Head of caudate nucleus (tissue), 42 donors: ENCODE measurements at regions of chr3 and their contacts with region 1.

Region 1: DNA sequence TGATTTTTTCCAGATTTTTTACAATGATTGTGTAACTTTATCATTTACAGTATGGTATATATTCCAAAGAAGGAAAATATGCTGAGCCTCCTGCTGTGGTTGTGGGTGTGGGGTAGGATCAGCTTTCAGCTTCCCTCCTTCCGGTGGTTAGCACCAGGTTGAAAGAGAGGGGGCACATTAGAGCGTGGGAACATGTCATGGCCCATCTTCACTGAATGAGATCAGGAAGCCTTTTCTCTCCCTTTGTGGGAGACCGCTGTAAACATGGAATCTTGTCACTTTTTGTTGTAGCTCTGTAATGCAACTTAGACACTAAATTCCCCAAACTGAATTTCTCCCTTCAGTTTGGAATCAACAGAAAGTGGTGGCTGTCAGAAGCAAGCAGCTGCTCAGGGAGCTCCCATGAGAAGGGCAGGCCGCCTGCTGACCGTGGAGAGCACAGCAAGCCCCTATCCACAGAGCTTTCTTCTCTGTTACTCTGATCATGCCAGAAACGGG is 86.7 kb upstream of the LIMD1 start:
- DNase-seq: peak in 22 of 42 donors; percentile 24 to 75 (median 40)

Region 2: GRCh38 chr3:45037734-45038455 is 470.0 kb before region 1 on chr3:
- intact Hi-C with region 1: loop called (anchors 10 kb)
- DNase-seq: peak; percentile 81 to 98 (median 93)

Region 3: GRCh38 chr3:45105855-45106671 is 401.8 kb before region 1 on chr3:
- intact Hi-C with region 1: no loop called
- DNase-seq: no peak

Region 4: GRCh38 chr3:45593708-45594609 is 86.1 kb after region 1 on chr3:
- intact Hi-C with region 1: loop called (anchors 5 kb)
- DNase-seq: peak in 38 of 42 donors; percentile 19 to 75 (median 48)

Region 5: GRCh38 chr3:45612918-45613602 is 105.2 kb after region 1 on chr3:
- intact Hi-C with region 1: no loop called
- DNase-seq: no peak